Heart right ventricle (tissue), 16 donors: ENCODE measurements at regions of chr10 and their contacts with region 1.

Region 1: GRCh38 chr10:3785257-3785850 is 345 bp upstream of the KLF6 start:
- DNase-seq: peak; percentile 99
- ATAC-seq: peak; percentile 82 to 92 (median 84)
- H3K4me3 ChIP-seq: peak overlapping the region; percentile 67 to 99 (median 94)
- H3K27ac ChIP-seq: peak overlapping the region; percentile 99 to 100 (median 100)
- H3K4me1 ChIP-seq: peaks cover 11 to 34% (median 27%) of the 10 kb centered on the region in 9 donors
- H3K27me3 ChIP-seq: no peaks in the 10 kb centered on the region
- CTCF ChIP-seq: peak in 2 of 9 donors; percentile 3 to 15

Region 2: DNA sequence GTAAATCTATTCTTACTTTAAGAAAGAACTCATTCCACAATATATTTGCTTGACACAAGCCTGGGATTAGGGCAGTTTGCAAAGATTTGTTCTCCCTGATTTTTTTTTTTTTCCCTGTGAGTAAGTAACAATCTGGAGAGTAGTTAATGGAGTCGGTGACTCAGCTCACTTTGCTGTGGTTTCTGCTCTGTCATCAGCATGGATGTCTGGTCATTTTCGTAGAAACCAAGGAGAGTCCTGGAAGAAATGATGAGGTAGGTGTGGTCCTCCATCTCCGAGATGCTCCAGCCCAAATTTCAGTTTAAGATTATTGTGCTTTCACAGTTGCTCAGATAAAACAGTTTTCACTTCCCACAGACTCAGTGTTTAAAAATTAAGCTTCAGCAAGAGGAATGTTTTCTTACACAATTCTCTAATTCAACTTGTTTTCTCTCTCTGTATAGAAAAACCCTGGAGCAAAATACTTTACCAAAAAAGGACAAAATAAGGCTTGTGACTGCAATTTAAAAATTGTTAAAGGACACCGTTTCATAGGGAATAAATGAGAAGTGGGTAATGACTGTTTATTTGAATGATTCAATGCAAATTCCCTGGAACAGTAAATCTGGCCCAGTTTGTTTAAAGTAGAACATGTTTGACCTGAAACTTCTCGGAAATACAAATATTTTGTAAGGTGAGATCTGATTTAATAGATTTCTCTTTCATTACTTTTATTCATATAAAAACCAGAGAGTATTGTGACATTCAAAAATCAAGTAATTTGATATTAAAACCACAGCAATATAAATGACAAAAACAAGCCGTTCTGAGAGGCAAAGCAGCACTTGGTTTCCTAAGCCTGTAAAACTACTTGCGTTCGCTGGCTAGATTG is 536.2 kb before region 1 on chr10:
- intact Hi-C with region 1: loop called in 3 of 10 experiments (anchors 5 to 10 kb)
- DNase-seq: no peak
- ATAC-seq: peak in 6 of 8 donors; percentile 49 to 86 (median 70)
- H3K4me3 ChIP-seq: no peak overlapping the region
- H3K27ac ChIP-seq: peak overlapping the region in 8 of 10 donors; percentile 23 to 76 (median 54)
- H3K4me1 ChIP-seq: peaks cover 0 to 13% (median 0%) of the 10 kb centered on the region in 9 donors
- H3K27me3 ChIP-seq: peaks cover 0 to 3% (median 0%) of the 10 kb centered on the region in 7 donors
- CTCF ChIP-seq: no peak

Region 3: DNA sequence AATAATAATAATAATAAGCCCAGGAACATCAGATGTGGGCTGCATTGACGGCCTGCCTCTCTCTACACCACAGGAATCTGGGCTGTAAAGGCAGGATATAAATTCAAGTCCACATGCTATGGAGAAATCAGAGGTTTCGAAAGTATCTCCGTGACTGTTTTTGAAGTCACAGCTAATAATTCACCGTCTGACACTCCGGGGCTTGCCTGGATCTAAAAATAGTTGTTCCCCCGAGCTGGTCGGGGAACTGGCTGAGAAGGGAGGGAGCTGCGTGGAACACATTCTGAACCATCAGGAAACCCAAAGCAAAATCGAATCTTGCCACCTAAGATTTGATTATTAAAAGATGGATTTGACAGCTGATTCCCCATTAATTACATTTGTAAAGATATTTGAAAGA is 35.8 kb before region 1 on chr10:
- intact Hi-C with region 1: loop called in 1 of 10 experiments (anchors 2 kb)
- DNase-seq: no peak
- ATAC-seq: peak; percentile 47 to 81 (median 73)
- H3K4me3 ChIP-seq: peak overlapping the region in 8 of 10 donors; percentile 2 to 37 (median 30)
- H3K27ac ChIP-seq: peak overlapping the region; percentile 6 to 84 (median 76)
- H3K4me1 ChIP-seq: peaks cover 0 to 52% (median 43%) of the 10 kb centered on the region in 9 donors
- H3K27me3 ChIP-seq: no peaks in the 10 kb centered on the region
- CTCF ChIP-seq: no peak

Region 4: DNA sequence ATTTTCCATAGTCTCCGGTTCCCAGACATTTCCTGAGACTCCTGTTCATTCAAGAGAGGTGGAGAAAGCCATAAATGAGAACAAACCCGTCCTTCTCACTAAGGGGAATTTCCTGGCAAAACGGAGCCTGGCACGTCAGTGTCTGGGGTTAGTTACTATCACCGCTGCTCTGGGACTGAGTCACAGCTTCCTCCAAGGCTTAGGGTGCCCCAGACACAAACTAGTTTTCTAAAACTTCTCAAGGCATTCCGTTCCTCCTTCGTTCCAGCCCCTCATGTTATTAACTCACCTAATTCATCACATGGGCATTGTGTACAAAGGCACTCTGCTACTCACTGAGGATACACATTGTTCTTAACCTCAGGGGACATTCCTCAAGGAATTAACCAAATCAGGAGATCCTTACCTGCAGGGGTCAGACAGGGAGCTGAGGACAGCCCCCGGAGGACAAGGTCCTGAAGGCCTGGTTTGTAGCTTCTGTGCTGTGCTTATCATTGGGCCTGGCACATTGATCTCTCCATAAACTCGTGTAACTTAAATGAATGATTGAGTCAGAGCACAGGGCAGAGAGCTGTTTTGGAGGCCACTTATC is 102.6 kb after region 1 on chr10:
- intact Hi-C with region 1: loop called in 1 of 10 experiments (anchors 2 kb)
- DNase-seq: peak in 1 of 2 donors; percentile 42
- ATAC-seq: peak in 6 of 8 donors; percentile 30 to 50 (median 45)
- H3K4me3 ChIP-seq: no peak overlapping the region
- H3K27ac ChIP-seq: peak overlapping the region in 8 of 10 donors; percentile 62 to 86 (median 78)
- H3K4me1 ChIP-seq: peaks cover 0 to 40% (median 25%) of the 10 kb centered on the region in 9 donors
- H3K27me3 ChIP-seq: no peaks in the 10 kb centered on the region
- CTCF ChIP-seq: no peak

Region 5: DNA sequence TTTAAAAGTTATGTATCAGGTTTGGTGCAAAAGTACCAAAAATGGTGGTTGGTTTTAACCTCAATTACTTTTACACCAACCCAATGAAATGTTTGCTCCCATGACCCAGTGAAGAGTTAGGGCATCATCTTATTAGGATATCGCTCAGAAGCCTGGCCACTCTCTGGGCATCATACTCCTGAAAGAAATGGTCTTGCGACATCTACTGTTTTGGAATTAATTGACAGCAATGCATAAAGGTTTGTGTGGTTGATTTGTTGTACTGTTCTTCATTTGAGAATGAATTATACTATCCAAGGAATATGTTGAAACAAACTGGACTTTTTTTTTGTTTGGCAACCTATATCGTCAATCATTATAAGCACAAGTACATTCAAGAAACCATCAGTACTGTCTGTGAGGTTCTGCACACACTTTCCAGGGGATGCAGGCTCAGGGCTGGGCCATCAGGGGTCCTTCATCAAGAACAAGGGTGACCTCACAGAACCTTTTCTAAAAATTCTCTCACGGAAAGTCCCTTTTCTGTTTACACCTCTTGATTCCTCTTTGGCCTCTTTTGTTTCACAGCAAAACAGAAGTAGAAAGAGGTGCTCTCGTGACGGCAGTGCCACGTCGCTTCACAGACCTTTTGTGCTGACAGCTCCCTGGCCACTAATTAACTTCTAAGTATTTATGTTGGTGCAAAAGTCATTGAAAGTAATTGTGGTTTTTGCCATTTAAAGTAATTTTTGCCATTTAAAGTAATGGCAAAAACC is 116.9 kb after region 1 on chr10:
- intact Hi-C with region 1: no loop called
- DNase-seq: no peak
- ATAC-seq: peak; percentile 44 to 80 (median 72)
- H3K4me3 ChIP-seq: no peak overlapping the region
- H3K27ac ChIP-seq: peak overlapping the region in 7 of 10 donors; percentile 25 to 74 (median 44)
- H3K4me1 ChIP-seq: peaks cover 0 to 23% (median 12%) of the 10 kb centered on the region in 9 donors
- H3K27me3 ChIP-seq: no peaks in the 10 kb centered on the region
- CTCF ChIP-seq: peak in 4 of 9 donors; percentile 7 to 32 (median 22)

Region 6: GRCh38 chr10:4073912-4074311 is 288.6 kb after region 1 on chr10:
- intact Hi-C with region 1: loop called in 1 of 10 experiments (anchors 10 kb)
- DNase-seq: peak; percentile 13 to 30
- ATAC-seq: peak; percentile 21 to 85 (median 54)
- H3K4me3 ChIP-seq: no peak overlapping the region
- H3K27ac ChIP-seq: peak overlapping the region in 6 of 10 donors; percentile 23 to 62 (median 40)
- H3K4me1 ChIP-seq: peaks cover 0 to 38% (median 32%) of the 10 kb centered on the region in 9 donors
- H3K27me3 ChIP-seq: no peaks in the 10 kb centered on the region
- CTCF ChIP-seq: no peak

Region 7: GRCh38 chr10:4344511-4344994 is 559.2 kb after region 1 on chr10:
- intact Hi-C with region 1: loop called in 1 of 10 experiments (anchors 10 kb)
- DNase-seq: peak; percentile 39 to 72
- ATAC-seq: peak; percentile 78 to 99 (median 92)
- H3K4me3 ChIP-seq: peak overlapping the region in 1 of 10 donors; percentile 2
- H3K27ac ChIP-seq: peak overlapping the region; percentile 37 to 85 (median 68)
- H3K4me1 ChIP-seq: peaks cover 2 to 34% (median 24%) of the 10 kb centered on the region in 9 donors
- H3K27me3 ChIP-seq: no peaks in the 10 kb centered on the region
- CTCF ChIP-seq: peak in 4 of 9 donors; percentile 21 to 37 (median 34)

Region 8: DNA sequence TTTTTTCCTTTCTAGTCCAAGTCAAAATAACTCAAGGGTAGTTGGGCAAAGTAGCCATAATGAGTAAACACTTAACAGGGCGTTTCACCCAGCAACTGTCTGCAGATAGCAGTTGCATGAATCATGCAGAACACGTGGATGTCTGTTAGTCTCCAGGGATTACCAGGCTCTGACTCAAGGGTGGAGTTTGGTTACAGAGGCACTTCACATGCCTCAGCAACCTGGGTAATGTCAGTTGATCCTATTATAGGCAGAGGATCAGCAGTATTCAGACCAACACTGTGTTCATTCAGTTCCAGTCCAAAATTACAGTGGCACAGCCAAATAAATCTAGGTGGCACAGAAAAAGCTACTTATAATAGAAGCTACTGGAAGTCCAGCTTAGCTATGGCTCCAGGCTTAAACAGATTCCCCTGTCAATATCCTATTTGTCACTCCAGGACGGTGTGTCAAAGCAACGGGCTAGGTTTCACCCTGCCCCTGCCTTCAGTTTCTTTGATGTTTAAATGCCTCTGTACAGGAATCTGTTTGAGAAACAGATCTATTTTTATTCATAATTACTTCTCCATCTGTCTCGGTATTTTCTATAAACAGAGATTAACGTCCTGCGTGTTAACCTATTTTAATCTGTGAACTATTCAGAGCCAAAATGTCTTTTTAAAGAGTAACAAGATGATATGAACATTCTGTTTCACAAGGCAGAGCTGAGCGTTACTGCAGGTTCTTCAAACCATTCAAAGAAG is 878.0 kb after region 1 on chr10:
- intact Hi-C with region 1: loop called in 8 of 10 experiments (anchors 1 to 10 kb)
- DNase-seq: peak in 1 of 2 donors; percentile 88
- ATAC-seq: peak; percentile 84 to 95 (median 94)
- H3K4me3 ChIP-seq: peak overlapping the region in 5 of 10 donors; percentile 4 to 22 (median 13)
- H3K27ac ChIP-seq: peak overlapping the region; percentile 87 to 96 (median 92)
- H3K4me1 ChIP-seq: peaks cover 0 to 52% (median 36%) of the 10 kb centered on the region in 9 donors
- H3K27me3 ChIP-seq: no peaks in the 10 kb centered on the region
- CTCF ChIP-seq: no peak